Astrocyte of the cerebellum (primary cell): ENCODE measurements at regions of chr16 and their contacts with region 1.

Region 1: GRCh38 chr16:19517418-19518089 is 4.3 kb downstream of the GDE1 start:
- DNase-seq: peak; percentile 9
- H3K4me3 ChIP-seq: no peak overlapping the region
- CTCF ChIP-seq: no peak

Region 2: DNA sequence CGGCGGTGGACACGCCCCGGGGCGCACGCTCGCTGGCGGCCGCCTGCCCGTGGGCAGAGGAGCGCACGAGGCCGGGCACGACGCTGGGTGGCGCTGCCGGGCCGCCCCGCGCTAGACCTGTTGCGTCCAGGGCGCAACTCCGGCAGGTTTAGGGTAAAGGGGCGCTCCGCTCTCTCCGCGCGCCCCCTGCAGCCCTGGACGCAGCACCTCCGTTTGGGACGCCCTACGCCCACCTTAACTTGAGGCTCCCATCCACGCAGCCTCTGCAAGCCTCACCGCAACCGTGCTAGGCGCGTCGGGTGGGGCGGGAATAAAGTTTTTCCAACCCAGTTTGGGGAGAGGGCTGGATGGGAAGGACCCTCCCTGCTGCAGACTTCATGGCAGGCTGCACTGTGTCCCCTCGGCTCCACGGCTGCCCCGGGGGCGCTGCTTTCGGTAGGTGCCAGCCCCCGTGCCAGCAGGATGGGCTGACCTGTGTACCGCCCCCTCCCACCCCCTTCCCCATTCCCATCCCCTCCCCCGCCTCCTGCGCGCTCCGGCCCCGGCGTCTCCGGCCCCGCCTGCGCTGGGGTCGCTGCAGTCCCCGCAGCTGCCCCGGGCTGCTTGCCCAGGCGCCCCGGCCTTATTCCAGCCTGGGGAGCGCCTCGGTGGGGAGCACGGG is 349.7 kb before region 1 on chr16 and contains the start of gene SYT17:
- in situ Hi-C with region 1: loop called (anchors 10 kb)
- DNase-seq: peak; percentile 19
- H3K4me3 ChIP-seq: peak within 1 kb of the TSS; percentile 43
- CTCF ChIP-seq: peak; percentile 56